PC-3 (cell line): ENCODE measurements at regions of chr19 and their contacts with region 1.

Region 1: DNA sequence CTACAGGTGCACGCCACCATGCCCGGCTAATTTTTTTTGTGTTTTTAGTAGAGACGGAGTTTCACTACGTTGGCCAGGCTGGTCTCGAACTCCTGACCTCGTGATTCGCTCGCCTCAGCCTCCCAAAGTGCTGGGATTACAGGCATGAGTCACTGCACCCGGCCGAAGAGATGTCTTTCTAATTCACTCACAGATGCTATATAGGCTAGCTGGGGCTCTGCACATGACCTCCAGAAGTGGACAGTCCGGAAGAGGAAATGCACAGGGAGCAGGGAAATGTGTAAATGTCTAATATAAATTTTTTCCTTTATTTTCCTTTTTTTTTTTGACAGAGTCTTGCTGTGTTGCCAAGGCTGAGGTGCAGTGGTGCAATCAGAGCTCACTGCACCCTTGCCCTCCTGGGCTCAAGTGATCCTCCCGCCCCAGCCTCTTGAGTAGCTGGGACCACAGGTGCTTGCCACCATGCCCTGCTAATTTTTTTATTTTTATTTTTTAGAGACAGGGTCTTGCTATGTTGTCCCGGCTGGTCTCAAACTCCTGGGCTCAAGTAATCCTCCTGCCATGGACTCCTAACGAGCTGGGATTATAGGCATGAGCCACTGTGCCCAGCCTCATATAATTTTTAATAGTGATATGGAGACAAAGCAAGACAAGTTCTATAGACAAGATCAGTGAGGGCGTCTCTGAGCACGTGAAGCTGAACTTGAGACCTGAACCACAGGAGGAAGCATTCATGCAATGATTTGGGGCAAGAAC is 8.4 kb downstream of the GIPC1 start:
- DNase-seq: no peak
- ATAC-seq: no peak
- H3K4me3 ChIP-seq: no peak overlapping the region
- H3K27ac ChIP-seq: no peak overlapping the region
- H3K4me1 ChIP-seq: no peaks in the 10 kb centered on the region
- H3K27me3 ChIP-seq: no peaks in the 10 kb centered on the region
- CTCF ChIP-seq: no peak

Region 2: GRCh38 chr19:14505488-14506432 is 18.2 kb after region 1 on chr19:
- CTCF ChIA-PET with region 1: no interaction called
- POLR2A ChIA-PET with region 1: interaction called, 12 read pairs
- intact Hi-C with region 1: no loop called
- DNase-seq: peak; percentile 99
- ATAC-seq: peak; percentile 83
- H3K4me3 ChIP-seq: peak overlapping the region; percentile 41
- H3K27ac ChIP-seq: peak overlapping the region; percentile 96
- H3K4me1 ChIP-seq: peaks cover 74% of the 10 kb centered on the region
- H3K27me3 ChIP-seq: no peaks in the 10 kb centered on the region
- CTCF ChIP-seq: peak; percentile 93